SK-MEL-5 (cell line): ENCODE measurements at regions of chr5 and their contacts with region 1.

Region 1: GRCh38 chr5:114449860-114450421 is 88.1 kb downstream of the KCNN2 start:
- DNase-seq: peak; percentile 82

Region 2: GRCh38 chr5:114101153-114101552 is 348.8 kb before region 1 on chr5:
- in situ Hi-C with region 1: loop called (anchors 25 kb)
- DNase-seq: peak; percentile 65

Region 3: DNA sequence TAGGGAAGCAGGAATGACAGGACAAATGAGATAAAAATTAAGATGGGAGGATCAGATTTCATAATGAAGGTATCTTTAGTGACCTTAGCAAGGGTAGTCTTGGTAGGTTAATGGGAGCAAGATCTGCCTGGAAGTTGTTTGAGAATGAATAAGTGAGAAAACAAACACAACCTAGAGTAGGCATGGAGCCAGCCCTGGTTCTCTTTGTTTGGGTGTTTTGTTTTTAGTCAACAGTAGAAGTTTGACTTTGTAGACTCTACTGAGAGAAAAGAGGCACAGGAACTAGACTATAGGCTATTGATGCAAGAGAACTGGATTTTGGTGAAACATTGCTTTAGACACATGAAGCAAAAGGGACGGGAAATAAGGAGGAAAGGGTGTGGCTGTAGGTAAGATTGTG is 47.7 kb before region 1 on chr5:
- in situ Hi-C with region 1: no loop called
- DNase-seq: no peak